ENCODE measurements at regions of chr6 and their contacts with region 1.

Region 1: GRCh38 chr6:139219271-139219729 is 72.5 kb downstream of the TXLNB start:
- DNase-seq: peak; percentile 78 to 89
- ATAC-seq: peak; percentile 99
- H3K4me3 ChIP-seq: peak overlapping the region; percentile 19
- H3K27ac ChIP-seq: peak overlapping the region; percentile 84
- H3K4me1 ChIP-seq: peaks cover 10% of the 10 kb centered on the region
- H3K27me3 ChIP-seq: no peaks in the 10 kb centered on the region
- CTCF ChIP-seq: peak; percentile 83

Region 2: DNA sequence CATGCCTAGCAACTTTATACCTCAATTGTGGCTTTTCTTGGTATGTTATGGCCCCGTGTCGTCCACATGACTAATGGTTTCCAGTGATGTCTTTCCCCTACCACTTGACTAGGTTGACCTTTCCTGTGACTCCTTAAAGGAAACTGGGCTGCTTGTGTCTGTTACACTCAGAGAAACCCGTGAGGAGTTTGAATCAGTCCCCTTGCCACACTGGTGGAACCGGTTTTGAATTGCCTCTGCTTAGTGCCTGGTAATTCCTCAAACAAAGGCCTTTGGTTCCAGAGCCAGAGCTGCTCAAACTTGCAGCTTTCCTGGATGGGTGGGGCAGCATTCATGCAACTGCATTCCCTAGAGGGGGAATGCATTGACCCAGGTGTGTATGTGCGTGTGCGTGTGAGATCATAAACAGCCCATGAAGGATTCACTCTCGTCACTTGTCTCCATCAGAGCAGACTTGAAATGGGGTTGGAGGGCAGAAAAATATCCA is 401.4 kb before region 1 on chr6:
- intact Hi-C with region 1: loop called in 1 of 2 experiments (anchors 10 kb)
- DNase-seq: no peak
- ATAC-seq: no peak
- H3K4me3 ChIP-seq: no peak overlapping the region
- H3K27ac ChIP-seq: no peak overlapping the region
- H3K4me1 ChIP-seq: no peaks in the 10 kb centered on the region
- H3K27me3 ChIP-seq: no peaks in the 10 kb centered on the region
- CTCF ChIP-seq: no peak

Region 3: DNA sequence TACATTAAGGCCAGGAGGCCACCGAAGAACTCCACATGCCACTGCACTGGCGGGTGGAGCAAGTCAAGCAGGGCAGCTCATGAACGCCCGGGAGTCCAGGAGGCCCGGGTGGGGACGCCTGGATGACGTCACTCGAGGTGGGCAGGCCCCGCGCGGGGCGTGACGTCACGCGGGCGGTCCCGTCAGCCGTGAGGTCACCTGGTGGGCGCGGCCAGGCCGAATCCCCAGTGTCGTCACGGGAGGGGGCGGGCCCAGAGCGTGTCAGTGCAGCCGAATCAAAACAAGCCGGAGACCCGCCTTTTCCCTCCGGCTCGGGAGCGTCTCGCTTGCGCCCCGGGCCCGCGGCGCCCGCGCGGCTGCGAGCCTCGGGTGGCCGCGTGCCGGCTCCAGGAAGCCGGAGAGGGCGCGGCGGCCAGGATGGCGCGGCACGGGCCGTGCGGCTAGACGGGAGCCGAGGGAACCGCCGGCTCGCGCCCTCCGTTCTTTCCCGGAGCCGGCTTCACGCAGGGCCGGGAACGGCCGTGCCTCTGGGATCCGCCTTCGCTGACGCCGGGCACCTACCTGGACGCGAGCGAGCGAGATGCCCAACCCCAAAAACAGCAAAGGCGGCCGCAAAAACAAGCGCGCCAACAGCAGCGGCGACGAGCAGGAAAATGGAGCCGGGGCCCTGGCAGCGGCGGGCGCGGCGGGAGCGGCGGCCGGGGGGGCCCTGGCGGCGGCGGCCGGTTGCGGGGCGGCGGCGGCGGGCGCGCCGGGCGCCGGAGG is 84.3 kb before region 1 on chr6 and contains the start of gene HECA:
- intact Hi-C with region 1: loop called in 1 of 2 experiments (anchors 5 kb)
- DNase-seq: peak; percentile 98 to 99
- ATAC-seq: peak; percentile 93 to 95 (median 94)
- H3K4me3 ChIP-seq: peak within 1 kb of the TSS; percentile 89
- H3K27ac ChIP-seq: peak within 1 kb of the TSS; percentile 89
- H3K4me1 ChIP-seq: peaks cover 28% of the 10 kb centered on the region
- H3K27me3 ChIP-seq: no peaks in the 10 kb centered on the region
- CTCF ChIP-seq: no peak
- total RNA-seq, gene HECA: 30.8 to 39.7 (median 33.8) TPM

Region 4: GRCh38 chr6:139364302-139364981 is 145.1 kb after region 1 on chr6:
- intact Hi-C with region 1: loop called (anchors 1 to 5 kb)
- DNase-seq: no peak
- ATAC-seq: peak; percentile 46 to 82 (median 75)
- H3K4me3 ChIP-seq: no peak overlapping the region
- H3K27ac ChIP-seq: no peak overlapping the region
- H3K4me1 ChIP-seq: peaks cover 11% of the 10 kb centered on the region
- H3K27me3 ChIP-seq: no peaks in the 10 kb centered on the region
- CTCF ChIP-seq: peak; percentile 80

Region 5: GRCh38 chr6:139369568-139370282 is 150.4 kb after region 1 on chr6:
- intact Hi-C with region 1: loop called (anchors 1 to 5 kb)
- DNase-seq: no peak
- ATAC-seq: peak in 1 of 4 donors; percentile 15
- H3K4me3 ChIP-seq: peak overlapping the region; percentile 80
- H3K27ac ChIP-seq: peak overlapping the region; percentile 98
- H3K4me1 ChIP-seq: peaks cover 30% of the 10 kb centered on the region
- H3K27me3 ChIP-seq: no peaks in the 10 kb centered on the region
- CTCF ChIP-seq: peak; percentile 73

Measured in psoas muscle (tissue), 8 donors.